IMR-90 (cell line): ENCODE measurements at regions of chr3 and their contacts with region 1.

Region 1: GRCh38 chr3:54243056-54243931 is 120.9 kb downstream of the CACNA2D3 start:
- DNase-seq: no peak
- ATAC-seq: no peak
- H3K4me3 ChIP-seq: no peak overlapping the region
- H3K27ac ChIP-seq: no peak overlapping the region
- H3K4me1 ChIP-seq: no peaks in the 10 kb centered on the region
- H3K27me3 ChIP-seq: no peaks in the 10 kb centered on the region
- CTCF ChIP-seq: no peak
- POLR2A ChIP-seq: no peak
- RAD21 ChIP-seq: no peak

Region 2: GRCh38 chr3:54146506-54147239 is 96.6 kb before region 1 on chr3:
- CTCF ChIA-PET with region 1: no interaction called
- POLR2A ChIA-PET with region 1: no interaction called
- dilution Hi-C with region 1: no loop called
- in situ Hi-C with region 1: no loop called
- intact Hi-C with region 1: no loop called
- DNase-seq: no peak
- ATAC-seq: no peak
- H3K4me3 ChIP-seq: no peak overlapping the region
- H3K27ac ChIP-seq: no peak overlapping the region
- H3K4me1 ChIP-seq: no peaks in the 10 kb centered on the region
- H3K27me3 ChIP-seq: no peaks in the 10 kb centered on the region
- CTCF ChIP-seq: no peak
- POLR2A ChIP-seq: no peak
- RAD21 ChIP-seq: no peak

Region 3: DNA sequence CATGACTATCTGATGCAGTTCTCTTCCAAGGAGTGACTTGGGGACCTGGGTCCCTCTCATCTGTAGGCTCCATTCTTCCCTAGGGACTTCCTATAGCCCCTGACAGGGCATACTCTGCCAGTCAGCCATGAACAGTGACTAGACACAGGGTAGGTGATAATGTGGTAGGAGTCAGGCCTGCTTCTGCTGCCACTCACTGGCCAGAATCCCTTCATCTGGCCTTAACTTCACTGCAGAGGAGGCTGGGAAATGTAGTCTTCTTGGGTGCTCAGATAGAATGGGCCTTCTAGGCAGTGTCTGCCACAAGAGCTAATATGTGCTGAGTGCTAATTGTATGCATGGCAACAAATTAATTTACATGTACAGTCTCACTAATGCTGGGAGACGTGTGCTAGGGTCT is 36.4 kb before region 1 on chr3:
- CTCF ChIA-PET with region 1: no interaction called
- POLR2A ChIA-PET with region 1: no interaction called
- dilution Hi-C with region 1: no loop called
- in situ Hi-C with region 1: no loop called
- intact Hi-C with region 1: no loop called
- DNase-seq: no peak
- ATAC-seq: no peak
- H3K4me3 ChIP-seq: no peak overlapping the region
- H3K27ac ChIP-seq: no peak overlapping the region
- H3K4me1 ChIP-seq: no peaks in the 10 kb centered on the region
- H3K27me3 ChIP-seq: no peaks in the 10 kb centered on the region
- CTCF ChIP-seq: no peak
- POLR2A ChIP-seq: no peak
- RAD21 ChIP-seq: no peak

Region 4: DNA sequence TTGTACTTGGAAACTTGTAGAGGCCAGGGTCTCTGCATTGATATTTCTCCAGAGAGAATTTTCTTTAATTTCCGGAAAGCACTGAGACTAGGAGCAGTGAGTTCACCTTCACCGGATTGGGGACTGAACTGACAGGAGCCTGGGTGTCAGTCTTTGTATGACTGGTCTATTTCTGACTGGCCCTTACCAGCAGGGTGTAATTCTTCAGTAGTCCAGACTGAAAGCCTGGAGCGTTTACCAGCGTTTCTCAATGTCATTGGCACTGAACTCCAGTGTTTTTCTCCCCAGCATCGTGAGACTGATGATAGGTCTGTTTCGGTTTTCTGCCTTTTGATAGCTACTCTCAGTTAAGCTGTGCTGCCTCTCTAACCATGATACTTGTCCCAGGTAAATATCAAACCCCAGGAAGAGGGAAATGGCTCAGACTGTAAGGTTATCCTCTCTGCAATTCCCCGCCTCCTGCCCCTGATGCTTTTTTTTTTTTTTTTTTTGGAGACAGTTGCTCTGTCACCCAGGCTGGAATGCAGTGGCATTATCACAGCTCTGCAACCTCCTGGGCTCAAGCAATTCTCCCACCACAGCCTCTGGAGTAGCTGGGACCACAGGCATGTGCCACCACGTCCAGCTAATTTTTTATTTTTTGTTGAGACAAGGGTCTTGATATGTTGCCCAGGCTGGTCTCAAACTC is 17.3 kb before region 1 on chr3:
- CTCF ChIA-PET with region 1: no interaction called
- POLR2A ChIA-PET with region 1: no interaction called
- dilution Hi-C with region 1: no loop called
- in situ Hi-C with region 1: no loop called
- intact Hi-C with region 1: no loop called
- DNase-seq: no peak
- ATAC-seq: no peak
- H3K4me3 ChIP-seq: no peak overlapping the region
- H3K27ac ChIP-seq: no peak overlapping the region
- H3K4me1 ChIP-seq: no peaks in the 10 kb centered on the region
- H3K27me3 ChIP-seq: no peaks in the 10 kb centered on the region
- CTCF ChIP-seq: no peak
- POLR2A ChIP-seq: no peak
- RAD21 ChIP-seq: no peak

Region 5: GRCh38 chr3:54283470-54283869 is 40.2 kb after region 1 on chr3:
- CTCF ChIA-PET with region 1: no interaction called
- POLR2A ChIA-PET with region 1: no interaction called
- dilution Hi-C with region 1: no loop called
- in situ Hi-C with region 1: no loop called
- intact Hi-C with region 1: loop called (anchors 1 kb)
- DNase-seq: no peak
- ATAC-seq: no peak
- H3K4me3 ChIP-seq: no peak overlapping the region
- H3K27ac ChIP-seq: no peak overlapping the region
- H3K4me1 ChIP-seq: no peaks in the 10 kb centered on the region
- H3K27me3 ChIP-seq: no peaks in the 10 kb centered on the region
- CTCF ChIP-seq: no peak
- POLR2A ChIP-seq: no peak
- RAD21 ChIP-seq: no peak